Activated CD8-positive, alpha-beta T cell treated with anti-CD3 and anti-CD28 coated beads for 36 hours (primary cell): ENCODE measurements at regions of chr9 and their contacts with region 1.

Region 1: DNA sequence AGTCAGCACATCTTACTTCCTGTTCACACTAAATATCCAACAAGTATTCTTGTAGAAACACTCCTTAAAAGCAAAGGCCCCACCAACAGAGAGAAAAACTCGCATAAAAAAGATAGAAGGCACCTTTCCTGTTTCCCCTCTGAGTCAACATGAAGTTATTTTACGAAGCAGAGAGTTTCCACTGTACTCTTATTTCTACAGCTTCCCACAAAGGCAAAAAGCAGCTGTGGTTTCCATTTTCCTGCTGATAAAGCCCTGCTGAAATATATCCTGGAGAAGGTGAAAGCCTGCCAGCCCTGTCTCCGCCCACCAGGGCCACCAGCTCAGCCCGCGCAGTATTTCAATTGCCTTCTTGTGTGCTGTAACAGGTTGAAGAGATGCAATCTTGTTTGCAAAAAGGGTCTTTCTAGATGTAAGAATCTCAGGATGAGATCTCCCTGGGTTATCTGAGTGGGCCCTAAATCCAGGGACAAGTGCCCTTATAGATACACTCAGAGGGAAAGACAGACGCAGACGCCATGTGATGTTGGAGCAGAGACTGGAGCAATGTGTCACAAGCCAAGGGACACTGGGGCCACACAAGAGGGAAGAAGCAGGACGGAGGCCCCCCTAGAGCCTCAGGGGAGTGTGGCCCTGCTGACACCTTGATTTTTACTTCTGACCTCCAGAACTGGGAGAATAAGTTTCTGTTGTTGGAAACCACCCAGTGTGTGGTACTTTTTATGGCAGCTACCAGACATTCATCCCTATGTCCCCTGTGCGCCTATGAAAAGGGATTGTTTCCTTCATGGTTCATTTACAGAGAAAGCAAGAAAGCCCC is 19.9 kb downstream of the SEMA4D start:
- DNase-seq: peak; percentile 75
- ATAC-seq: peak; percentile 31
- H3K4me3 Mint-ChIP-seq: peak overlapping the region; percentile 90
- H3K27ac Mint-ChIP-seq: peak overlapping the region; percentile 98
- H3K4me1 Mint-ChIP-seq: peaks cover 85% of the 10 kb centered on the region
- H3K27me3 Mint-ChIP-seq: peaks cover 3% of the 10 kb centered on the region
- CTCF ChIP-seq: no peak

Region 2: DNA sequence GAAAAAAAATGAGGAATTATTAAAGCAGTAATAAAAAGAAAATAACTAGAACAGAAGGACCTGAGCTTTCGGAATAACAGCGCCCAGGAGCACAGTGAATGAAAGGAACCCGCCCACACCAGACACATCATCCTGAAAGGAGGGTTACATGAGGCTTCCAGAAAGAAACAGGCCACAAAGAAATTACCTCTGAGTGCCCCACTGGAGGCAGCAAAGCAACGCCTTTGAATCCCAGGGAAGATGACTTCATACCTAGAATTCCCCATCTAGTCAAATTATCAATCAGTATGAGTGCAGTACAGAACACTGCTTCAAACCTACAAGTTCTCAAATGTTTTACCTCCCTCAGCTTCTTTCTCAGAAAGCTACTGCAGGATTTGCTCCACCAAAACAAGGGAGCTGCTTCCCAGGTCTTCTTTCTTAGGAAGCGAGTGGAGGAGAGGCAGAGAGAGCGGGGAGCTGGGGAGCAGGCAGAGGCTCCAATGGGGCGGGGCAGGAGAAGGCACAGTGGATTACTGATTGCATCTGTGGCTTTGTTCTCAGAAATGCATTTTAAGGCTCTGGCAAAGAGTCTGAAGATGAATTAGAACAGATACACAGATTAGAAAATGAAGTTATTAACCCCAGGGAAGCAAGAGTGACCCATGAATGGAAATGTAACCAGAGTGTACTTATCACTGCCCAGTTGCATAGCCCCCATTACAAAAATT is 67.2 kb before region 1 on chr9:
- CTCF ChIA-PET with region 1: no interaction called
- POLR2A ChIA-PET with region 1: interaction called, 16 read pairs
- intact Hi-C with region 1: no loop called
- DNase-seq: peak; percentile 85
- ATAC-seq: peak; percentile 70
- H3K4me3 Mint-ChIP-seq: peak overlapping the region; percentile 40
- H3K27ac Mint-ChIP-seq: peak overlapping the region; percentile 95
- H3K4me1 Mint-ChIP-seq: peaks cover 95% of the 10 kb centered on the region
- H3K27me3 Mint-ChIP-seq: no peaks in the 10 kb centered on the region
- CTCF ChIP-seq: peak; percentile 20

Region 3: DNA sequence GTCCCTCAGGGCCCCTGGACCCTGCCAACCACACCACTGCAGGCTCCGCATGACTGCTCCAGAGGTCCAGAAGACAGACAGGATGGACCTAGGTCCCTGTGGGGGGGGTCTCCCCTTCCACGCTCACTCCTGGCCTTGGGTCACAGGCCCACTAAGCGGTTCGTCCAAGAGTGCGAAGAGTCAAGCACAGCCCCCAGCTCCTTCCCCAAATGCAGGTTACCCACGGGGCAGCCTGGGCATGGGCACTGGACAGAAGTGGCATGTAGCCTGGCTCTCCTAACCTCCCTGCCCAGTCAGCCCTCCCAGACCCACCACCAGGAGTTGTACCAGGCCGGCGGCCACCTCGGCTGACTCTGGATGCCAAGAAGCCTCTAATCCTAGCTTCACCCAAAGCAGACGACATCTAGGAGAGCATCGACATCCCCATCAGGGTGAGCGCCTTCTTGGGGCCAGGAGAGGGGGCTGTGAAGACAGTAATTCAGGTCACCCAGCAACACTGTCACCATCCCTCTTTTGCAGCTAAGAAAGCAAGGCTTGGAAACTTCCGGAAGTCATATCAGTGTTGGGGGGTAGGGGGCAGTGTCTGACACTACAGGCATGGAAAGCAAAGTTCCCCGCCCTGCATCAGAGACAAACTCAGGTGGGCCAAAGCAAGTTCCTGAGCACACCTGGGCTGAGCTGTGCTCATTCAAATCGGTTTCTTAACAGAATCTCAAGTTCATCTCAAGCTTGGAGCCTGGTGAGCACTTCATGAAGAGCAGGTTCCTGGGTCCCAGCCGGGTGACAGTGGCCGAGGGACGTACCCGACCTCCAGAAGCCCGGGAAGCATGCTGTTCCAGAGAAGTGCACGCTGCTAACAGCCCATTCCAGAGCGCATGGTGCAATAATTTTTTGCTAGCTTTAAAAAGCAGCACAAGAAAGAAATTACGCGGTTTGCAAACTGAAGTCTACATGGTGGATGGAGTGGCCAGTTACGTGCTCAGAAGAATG is 48.8 kb before region 1 on chr9:
- CTCF ChIA-PET with region 1: interaction called, 44 read pairs
- POLR2A ChIA-PET with region 1: interaction called, 37 read pairs
- intact Hi-C with region 1: no loop called
- DNase-seq: peak; percentile 83
- ATAC-seq: peak; percentile 35
- H3K4me3 Mint-ChIP-seq: peak overlapping the region; percentile 26
- H3K27ac Mint-ChIP-seq: peak overlapping the region; percentile 98
- H3K4me1 Mint-ChIP-seq: peaks cover 91% of the 10 kb centered on the region
- H3K27me3 Mint-ChIP-seq: no peaks in the 10 kb centered on the region
- CTCF ChIP-seq: peak; percentile 71

Region 4: GRCh38 chr9:89455356-89455824 is 22.6 kb before region 1 on chr9:
- CTCF ChIA-PET with region 1: interaction called, 3 read pairs
- POLR2A ChIA-PET with region 1: interaction called, 26 read pairs
- intact Hi-C with region 1: no loop called
- DNase-seq: peak; percentile 55
- ATAC-seq: peak; percentile 10
- H3K4me3 Mint-ChIP-seq: peak overlapping the region; percentile 62
- H3K27ac Mint-ChIP-seq: peak overlapping the region; percentile 95
- H3K4me1 Mint-ChIP-seq: peaks cover 94% of the 10 kb centered on the region
- H3K27me3 Mint-ChIP-seq: no peaks in the 10 kb centered on the region
- CTCF ChIP-seq: no peak

Region 5: GRCh38 chr9:89466451-89467277 is 11.4 kb before region 1 on chr9:
- CTCF ChIA-PET with region 1: interaction called, 4 read pairs
- POLR2A ChIA-PET with region 1: interaction called, 32 read pairs
- intact Hi-C with region 1: loop called (anchors 2 kb)
- DNase-seq: peak; percentile 84
- ATAC-seq: peak; percentile 70
- H3K4me3 Mint-ChIP-seq: peak overlapping the region; percentile 68
- H3K27ac Mint-ChIP-seq: peak overlapping the region; percentile 95
- H3K4me1 Mint-ChIP-seq: peaks cover 92% of the 10 kb centered on the region
- H3K27me3 Mint-ChIP-seq: no peaks in the 10 kb centered on the region
- CTCF ChIP-seq: no peak

Region 6: DNA sequence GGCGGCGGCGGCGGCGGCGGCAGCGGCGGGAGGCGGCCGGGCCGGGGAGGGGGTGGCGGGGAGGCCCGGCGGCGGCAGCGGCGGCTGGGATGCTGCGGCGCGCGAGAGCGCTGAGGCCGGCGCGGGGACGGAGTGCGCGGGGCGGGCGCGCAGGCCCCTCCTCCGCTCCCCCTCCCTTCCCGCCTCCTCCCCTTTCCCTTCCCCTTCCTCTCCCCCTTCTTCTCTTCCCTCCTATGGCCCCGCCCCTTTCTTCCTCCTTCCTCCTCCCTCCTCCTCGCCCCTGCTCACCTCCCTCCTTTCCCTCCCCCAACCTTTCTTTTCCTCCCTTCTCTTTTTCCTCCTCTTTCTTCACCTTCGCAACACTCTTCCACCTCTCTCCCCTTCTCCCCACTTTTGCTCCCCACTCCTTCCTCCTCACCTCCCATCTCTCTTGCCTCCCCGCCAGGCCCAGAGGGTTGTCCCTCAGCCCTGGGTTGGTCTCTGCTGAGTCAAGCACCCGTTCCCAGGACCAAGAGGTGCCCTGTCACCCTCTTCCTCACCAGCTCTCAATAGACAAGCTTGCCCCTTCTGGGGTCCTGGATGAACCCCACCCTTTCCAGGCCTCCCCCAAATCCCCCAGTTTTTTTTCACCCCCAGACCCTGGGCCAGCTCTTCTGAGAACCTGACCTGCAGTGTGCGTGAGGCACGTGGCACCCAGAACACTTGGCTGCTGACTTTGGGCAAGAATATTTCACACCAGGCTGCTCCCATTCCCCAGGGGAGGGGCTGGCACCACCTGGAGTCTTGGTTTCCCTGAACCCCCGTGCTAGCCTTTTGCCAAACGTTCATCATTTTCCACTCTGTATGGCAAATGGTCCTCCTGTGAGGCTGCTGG is 20.2 kb after region 1 on chr9 and contains the start of gene SEMA4D:
- CTCF ChIA-PET with region 1: no interaction called
- POLR2A ChIA-PET with region 1: interaction called, 15 read pairs
- intact Hi-C with region 1: no loop called
- DNase-seq: peak; percentile 74
- ATAC-seq: peak; percentile 17
- H3K4me3 Mint-ChIP-seq: peak within 1 kb of the TSS; percentile 92
- H3K27ac Mint-ChIP-seq: peak within 1 kb of the TSS; percentile 94
- H3K4me1 Mint-ChIP-seq: peaks cover 77% of the 10 kb centered on the region
- H3K27me3 Mint-ChIP-seq: no peaks in the 10 kb centered on the region
- CTCF ChIP-seq: no peak
- total RNA-seq, gene SEMA4D: 290 to 317 TPM